WTC11 (cell line): ENCODE measurements at regions of chr4 and their contacts with region 1.

Region 1: GRCh38 chr4:80335554-80336358 is at the start of gene CFAP299:
- DNase-seq: peak; percentile 92
- ATAC-seq: peak; percentile 95
- H3K4me3 Mint-ChIP-seq: peak within 1 kb of the TSS; percentile 80
- H3K27ac Mint-ChIP-seq: no peak within 1 kb of the TSS
- H3K4me1 Mint-ChIP-seq: peaks cover 8% of the 10 kb centered on the region
- H3K27me3 Mint-ChIP-seq: peaks cover 29% of the 10 kb centered on the region
- CTCF ChIP-seq: no peak
- total RNA-seq, gene CFAP299: not detected in 3 replicates

Region 2: GRCh38 chr4:80221161-80221560 is 114.6 kb before region 1 on chr4:
- CTCF ChIA-PET with region 1: interaction called, 10 read pairs
- POLR2A ChIA-PET with region 1: no interaction called
- DNase-seq: no peak
- ATAC-seq: no peak
- H3K4me3 Mint-ChIP-seq: no peak overlapping the region
- H3K27ac Mint-ChIP-seq: no peak overlapping the region
- H3K4me1 Mint-ChIP-seq: no peaks in the 10 kb centered on the region
- H3K27me3 Mint-ChIP-seq: peaks cover 19% of the 10 kb centered on the region
- CTCF ChIP-seq: no peak

Region 3: GRCh38 chr4:80266253-80266901 is 69.4 kb before region 1 on chr4 and contains the start of gene FGF5:
- CTCF ChIA-PET with region 1: interaction called, 19 read pairs
- POLR2A ChIA-PET with region 1: no interaction called
- DNase-seq: peak; percentile 52
- ATAC-seq: peak; percentile 43
- H3K4me3 Mint-ChIP-seq: peak within 1 kb of the TSS; percentile 77
- H3K27ac Mint-ChIP-seq: no peak within 1 kb of the TSS
- H3K4me1 Mint-ChIP-seq: peaks cover 57% of the 10 kb centered on the region
- H3K27me3 Mint-ChIP-seq: peaks cover 100% of the 10 kb centered on the region
- CTCF ChIP-seq: no peak
- total RNA-seq, gene FGF5: not detected in 3 replicates

Region 4: DNA sequence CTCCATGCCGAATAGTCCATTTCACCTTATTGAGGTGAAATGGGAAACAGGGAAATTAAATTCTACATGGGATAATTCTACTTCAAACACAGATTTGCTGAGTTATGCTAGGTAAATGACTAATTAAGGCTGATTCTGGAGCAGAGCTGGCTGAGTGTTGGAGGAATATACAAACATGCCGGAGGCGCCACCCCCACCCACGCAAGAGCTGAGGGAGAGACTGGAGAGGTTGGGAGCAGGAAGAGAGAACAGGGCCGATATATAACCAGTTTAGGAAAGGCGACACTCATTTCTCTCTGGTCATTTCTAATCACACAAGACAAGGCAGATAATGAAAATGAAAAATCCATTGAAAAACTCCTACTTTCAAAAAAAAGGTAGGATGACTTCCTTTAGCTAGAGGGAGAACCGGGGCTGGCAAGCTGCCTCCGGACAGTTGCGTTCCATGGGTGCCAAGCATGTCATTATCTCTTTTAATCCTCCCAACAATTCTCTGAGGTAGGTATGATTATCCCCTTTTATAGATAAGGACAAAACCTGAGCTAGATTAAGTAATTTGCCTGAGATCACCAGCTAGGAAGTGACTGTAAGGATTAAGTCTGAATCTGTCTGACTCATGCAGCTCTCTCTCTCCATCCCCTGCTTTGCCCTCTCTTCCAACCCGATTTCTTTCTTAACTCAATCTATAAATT is 27.8 kb before region 1 on chr4:
- CTCF ChIA-PET with region 1: interaction called, 10 read pairs
- POLR2A ChIA-PET with region 1: no interaction called
- DNase-seq: no peak
- ATAC-seq: peak; percentile 67
- H3K4me3 Mint-ChIP-seq: no peak overlapping the region
- H3K27ac Mint-ChIP-seq: no peak overlapping the region; the same call in 1 of the 2 replicates
- H3K4me1 Mint-ChIP-seq: peaks cover 43% of the 10 kb centered on the region
- H3K27me3 Mint-ChIP-seq: no peaks in the 10 kb centered on the region; the same call in 1 of the 2 replicates
- CTCF ChIP-seq: no peak